ENCODE measurements at regions of chr5 and their contacts with region 1.

Region 1: DNA sequence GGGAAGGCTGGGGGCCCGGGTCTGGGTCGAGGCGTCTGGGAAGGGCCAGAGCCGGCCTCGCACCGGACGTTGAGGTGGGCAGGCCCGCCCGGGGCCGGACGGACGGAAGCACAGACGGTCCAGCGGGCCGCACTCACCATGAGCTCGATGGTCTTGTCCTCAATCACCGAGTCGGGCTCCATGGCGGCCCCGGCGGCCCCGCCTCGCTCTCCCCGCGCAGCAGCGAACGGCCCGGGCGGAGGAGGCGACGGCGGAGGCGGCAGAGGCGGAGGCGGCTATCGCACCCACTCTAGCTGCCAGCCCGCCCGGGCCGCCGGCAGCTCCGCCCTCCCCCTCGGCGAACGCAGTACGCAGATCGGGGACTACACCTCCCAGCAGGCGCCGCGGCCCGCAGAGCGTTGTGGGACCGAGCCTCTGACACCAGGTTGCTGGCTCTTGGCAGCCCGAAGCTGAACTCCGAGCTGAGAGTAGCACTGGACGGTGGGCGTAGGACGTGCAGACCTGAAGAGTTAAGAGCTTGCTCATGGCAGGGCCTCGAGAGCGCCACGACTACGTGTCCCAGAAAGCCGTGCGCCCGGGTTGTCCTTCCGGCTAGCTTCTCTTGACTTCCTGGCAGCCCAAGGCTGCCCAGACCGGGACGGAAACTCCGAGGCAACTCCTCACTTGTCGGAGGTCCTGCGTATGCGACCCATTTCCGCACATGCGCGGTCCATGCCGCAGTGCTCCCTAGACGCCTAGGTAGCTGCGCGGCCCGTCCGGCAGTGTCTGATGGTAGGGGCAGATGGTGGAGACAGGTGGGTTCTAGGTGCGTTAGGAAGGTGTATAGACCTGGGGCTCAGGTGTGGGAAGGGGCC is at the start of gene FBXW11:
- DNase-seq: peak; percentile 85 to 98 (median 92)
- ATAC-seq: peak; percentile 86
- H3K4me3 ChIP-seq: peak within 1 kb of the TSS; percentile 92
- H3K4me3 Mint-ChIP-seq: peak within 1 kb of the TSS; percentile 97
- H3K27ac ChIP-seq: peak within 1 kb of the TSS; percentile 96 to 98
- H3K27ac Mint-ChIP-seq: peak within 1 kb of the TSS; percentile 99
- H3K4me1 ChIP-seq: peaks cover 30% of the 10 kb centered on the region
- H3K4me1 Mint-ChIP-seq: peaks cover 57% of the 10 kb centered on the region
- H3K27me3 ChIP-seq: no peaks in the 10 kb centered on the region
- H3K27me3 Mint-ChIP-seq: no peaks in the 10 kb centered on the region
- CTCF ChIP-seq: no peak
- total RNA-seq, gene FBXW11: 20.9 to 24.0 TPM

Region 2: DNA sequence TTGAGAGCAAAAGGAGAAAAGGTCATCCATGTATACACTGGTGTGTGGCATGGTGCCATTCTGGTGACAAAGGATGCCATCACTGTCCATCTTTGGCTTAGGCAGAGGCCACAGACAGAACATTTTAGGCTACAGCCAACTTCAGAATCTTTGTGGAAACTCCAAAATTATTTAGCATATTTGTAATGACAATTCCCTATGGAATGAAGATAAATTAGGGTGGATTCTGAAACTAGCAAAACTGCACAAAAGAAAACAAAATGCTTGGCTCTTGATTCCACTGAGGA is 92.6 kb before region 1 on chr5:
- CTCF ChIA-PET with region 1: interaction called, 5 read pairs
- POLR2A ChIA-PET with region 1: interaction called, 16 read pairs
- intact Hi-C with region 1: no loop called
- DNase-seq: no peak
- ATAC-seq: no peak
- H3K4me3 ChIP-seq: no peak overlapping the region
- H3K4me3 Mint-ChIP-seq: no peak overlapping the region
- H3K27ac ChIP-seq: no peak overlapping the region
- H3K27ac Mint-ChIP-seq: peak overlapping the region; percentile 9
- H3K4me1 ChIP-seq: no peaks in the 10 kb centered on the region
- H3K4me1 Mint-ChIP-seq: peaks cover 45% of the 10 kb centered on the region
- H3K27me3 ChIP-seq: no peaks in the 10 kb centered on the region
- H3K27me3 Mint-ChIP-seq: no peaks in the 10 kb centered on the region
- CTCF ChIP-seq: no peak

Region 3: DNA sequence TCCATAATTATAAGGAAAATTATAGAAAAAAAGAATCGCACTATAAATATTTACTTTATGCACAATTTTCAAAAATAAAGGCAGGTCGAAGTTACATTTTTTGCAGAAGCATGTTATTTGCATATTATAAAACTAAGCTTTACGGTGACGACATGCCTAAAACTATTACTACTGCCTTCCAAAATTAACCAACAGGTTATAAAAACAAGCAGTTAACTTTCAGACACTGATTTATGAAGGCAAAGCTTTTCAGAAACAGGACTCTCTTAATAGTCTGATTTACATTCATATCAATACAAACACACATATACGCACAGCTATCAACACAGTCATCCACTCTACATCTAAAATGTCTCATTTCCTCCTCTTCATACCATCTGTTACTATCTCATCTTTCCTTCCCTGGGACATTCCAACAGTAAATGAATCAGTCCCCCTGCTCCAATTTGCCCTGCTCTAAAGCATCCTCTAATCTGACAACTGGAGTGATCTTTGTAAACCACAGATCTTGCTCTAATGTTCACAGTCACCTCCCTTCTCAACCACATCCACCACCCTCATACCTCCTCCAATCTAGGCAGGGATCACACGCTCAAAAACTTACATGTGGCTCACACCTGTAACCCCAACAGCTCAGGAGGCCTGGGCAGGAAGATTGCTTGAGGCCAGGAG is 21.7 kb before region 1 on chr5:
- CTCF ChIA-PET with region 1: no interaction called
- POLR2A ChIA-PET with region 1: interaction called, 20 read pairs
- intact Hi-C with region 1: no loop called
- DNase-seq: peak in 4 of 14 experiments; percentile 11 to 81 (median 58)
- ATAC-seq: peak; percentile 66
- H3K4me3 ChIP-seq: no peak overlapping the region
- H3K4me3 Mint-ChIP-seq: no peak overlapping the region
- H3K27ac ChIP-seq: no peak overlapping the region
- H3K27ac Mint-ChIP-seq: no peak overlapping the region
- H3K4me1 ChIP-seq: peaks cover 16% of the 10 kb centered on the region
- H3K4me1 Mint-ChIP-seq: peaks cover 26% of the 10 kb centered on the region
- H3K27me3 ChIP-seq: no peaks in the 10 kb centered on the region
- H3K27me3 Mint-ChIP-seq: no peaks in the 10 kb centered on the region
- CTCF ChIP-seq: no peak

Region 4: GRCh38 chr5:172071289-172071875 is 64.8 kb after region 1 on chr5:
- CTCF ChIA-PET with region 1: no interaction called
- POLR2A ChIA-PET with region 1: interaction called, 53 read pairs
- intact Hi-C with region 1: no loop called
- DNase-seq: peak in 1 of 14 experiments; percentile 52
- ATAC-seq: no peak
- H3K4me3 ChIP-seq: no peak overlapping the region
- H3K4me3 Mint-ChIP-seq: peak overlapping the region; percentile 23
- H3K27ac ChIP-seq: peak overlapping the region; percentile 23 to 61
- H3K27ac Mint-ChIP-seq: peak overlapping the region; percentile 89
- H3K4me1 ChIP-seq: peaks cover 33% of the 10 kb centered on the region
- H3K4me1 Mint-ChIP-seq: peaks cover 60% of the 10 kb centered on the region
- H3K27me3 ChIP-seq: no peaks in the 10 kb centered on the region
- H3K27me3 Mint-ChIP-seq: no peaks in the 10 kb centered on the region
- CTCF ChIP-seq: no peak

Region 5: DNA sequence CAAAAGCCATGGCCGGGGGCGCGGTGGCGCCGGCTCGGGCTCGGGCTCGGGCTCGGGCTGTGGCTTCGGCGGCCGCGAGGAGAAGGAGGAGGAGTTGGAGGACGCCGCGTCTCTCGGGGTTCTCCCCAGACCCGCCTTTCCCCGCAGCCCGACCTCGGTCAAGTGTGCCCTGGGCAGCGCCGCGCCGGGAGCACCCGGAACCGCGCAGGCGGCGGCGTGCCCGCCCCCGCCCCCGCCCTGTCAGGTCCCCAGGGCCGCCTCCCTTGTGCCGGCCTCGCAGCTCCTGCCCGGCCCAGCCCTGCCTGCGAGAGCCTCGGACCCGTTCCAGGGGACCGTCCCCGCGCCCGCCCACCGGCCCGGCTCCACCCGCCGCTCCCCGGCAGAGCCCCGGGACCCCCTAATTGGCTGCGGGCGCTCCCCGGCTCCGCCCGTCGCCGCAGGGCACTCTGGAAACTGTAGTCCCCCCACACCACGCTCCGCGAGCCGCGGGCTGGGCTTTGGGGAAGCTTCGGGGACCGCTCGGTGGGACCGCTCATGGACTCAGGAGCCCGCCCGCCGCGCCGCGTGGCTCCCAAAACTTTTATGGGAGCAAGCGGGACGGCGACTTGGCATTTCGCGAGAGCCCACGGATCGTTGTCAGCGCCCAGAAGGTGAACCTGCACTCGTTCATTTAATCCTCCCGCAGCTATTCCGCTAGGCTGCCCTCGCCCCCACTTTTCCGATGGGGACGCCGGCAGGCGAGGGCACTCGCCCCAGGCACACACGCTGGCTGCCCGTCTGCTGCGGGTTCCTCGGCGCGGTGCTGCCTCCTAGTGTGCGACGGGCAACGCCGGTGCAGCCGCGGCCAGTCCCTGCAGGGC is 181.7 kb after region 1 on chr5 and contains the start of gene STK10:
- CTCF ChIA-PET with region 1: interaction called, 7 read pairs
- POLR2A ChIA-PET with region 1: interaction called, 37 read pairs
- intact Hi-C with region 1: loop called (anchors 2 to 5 kb)
- DNase-seq: peak; percentile 79 to 95 (median 86)
- ATAC-seq: peak; percentile 74
- H3K4me3 ChIP-seq: peak within 1 kb of the TSS; percentile 99
- H3K4me3 Mint-ChIP-seq: peak within 1 kb of the TSS; percentile 100
- H3K27ac ChIP-seq: peak within 1 kb of the TSS; percentile 89 to 98
- H3K27ac Mint-ChIP-seq: peak within 1 kb of the TSS; percentile 98
- H3K4me1 ChIP-seq: peaks cover 37% of the 10 kb centered on the region
- H3K4me1 Mint-ChIP-seq: peaks cover 37% of the 10 kb centered on the region
- H3K27me3 ChIP-seq: no peaks in the 10 kb centered on the region
- H3K27me3 Mint-ChIP-seq: no peaks in the 10 kb centered on the region
- CTCF ChIP-seq: peak; percentile 92
- total RNA-seq, gene STK10: 211 to 229 TPM

Region 6: DNA sequence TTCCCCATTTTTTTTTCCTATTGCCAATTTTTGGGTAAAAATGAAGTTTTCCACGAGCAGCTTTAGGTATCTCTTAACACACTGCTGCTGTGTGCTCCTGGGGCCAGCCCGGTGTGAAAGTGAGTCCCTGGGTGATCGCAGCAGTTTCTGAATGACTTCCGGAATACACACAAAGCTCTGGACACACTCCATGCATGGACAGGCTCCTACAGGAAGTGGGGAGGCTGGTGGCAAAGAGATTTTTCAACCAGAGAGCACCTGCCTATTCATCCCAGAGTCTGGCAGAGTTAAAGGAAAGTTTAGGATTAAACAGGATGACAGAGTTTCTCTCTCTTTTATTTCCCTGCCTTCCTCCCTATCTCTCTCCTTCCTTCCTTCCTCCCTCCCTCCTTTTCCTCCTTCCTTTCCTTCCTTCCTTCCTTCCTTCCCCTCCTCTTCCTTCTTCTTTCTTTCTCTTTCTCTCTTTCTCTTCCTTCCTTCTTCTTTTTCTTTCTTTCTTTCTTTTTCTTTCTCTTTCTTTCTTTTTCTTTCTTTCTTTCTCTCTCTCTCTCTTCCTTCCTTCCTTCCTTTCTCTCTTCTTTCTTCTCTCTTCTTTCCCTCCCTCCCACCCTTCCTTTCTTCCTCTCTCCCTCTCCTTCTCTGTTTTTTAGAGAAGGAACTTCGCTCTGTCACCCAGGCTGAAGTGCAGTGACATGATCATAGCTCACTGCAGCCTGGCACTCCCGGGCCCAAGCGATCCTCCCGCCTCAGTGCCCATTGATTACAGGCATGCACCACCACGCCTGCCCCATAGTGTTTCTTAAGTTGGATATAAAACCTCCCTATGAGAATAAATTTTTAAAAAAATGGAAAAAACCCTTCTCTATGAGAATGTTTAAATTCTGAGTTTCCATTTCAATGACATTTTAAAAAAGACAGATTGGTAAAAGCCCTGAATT is 315.7 kb after region 1 on chr5:
- CTCF ChIA-PET with region 1: no interaction called
- POLR2A ChIA-PET with region 1: no interaction called
- intact Hi-C with region 1: no loop called
- DNase-seq: no peak
- ATAC-seq: no peak
- H3K4me3 ChIP-seq: no peak overlapping the region
- H3K4me3 Mint-ChIP-seq: no peak overlapping the region
- H3K27ac ChIP-seq: no peak overlapping the region
- H3K27ac Mint-ChIP-seq: no peak overlapping the region
- H3K4me1 ChIP-seq: no peaks in the 10 kb centered on the region
- H3K4me1 Mint-ChIP-seq: no peaks in the 10 kb centered on the region
- H3K27me3 ChIP-seq: no peaks in the 10 kb centered on the region
- H3K27me3 Mint-ChIP-seq: no peaks in the 10 kb centered on the region
- CTCF ChIP-seq: no peak

Region 7: DNA sequence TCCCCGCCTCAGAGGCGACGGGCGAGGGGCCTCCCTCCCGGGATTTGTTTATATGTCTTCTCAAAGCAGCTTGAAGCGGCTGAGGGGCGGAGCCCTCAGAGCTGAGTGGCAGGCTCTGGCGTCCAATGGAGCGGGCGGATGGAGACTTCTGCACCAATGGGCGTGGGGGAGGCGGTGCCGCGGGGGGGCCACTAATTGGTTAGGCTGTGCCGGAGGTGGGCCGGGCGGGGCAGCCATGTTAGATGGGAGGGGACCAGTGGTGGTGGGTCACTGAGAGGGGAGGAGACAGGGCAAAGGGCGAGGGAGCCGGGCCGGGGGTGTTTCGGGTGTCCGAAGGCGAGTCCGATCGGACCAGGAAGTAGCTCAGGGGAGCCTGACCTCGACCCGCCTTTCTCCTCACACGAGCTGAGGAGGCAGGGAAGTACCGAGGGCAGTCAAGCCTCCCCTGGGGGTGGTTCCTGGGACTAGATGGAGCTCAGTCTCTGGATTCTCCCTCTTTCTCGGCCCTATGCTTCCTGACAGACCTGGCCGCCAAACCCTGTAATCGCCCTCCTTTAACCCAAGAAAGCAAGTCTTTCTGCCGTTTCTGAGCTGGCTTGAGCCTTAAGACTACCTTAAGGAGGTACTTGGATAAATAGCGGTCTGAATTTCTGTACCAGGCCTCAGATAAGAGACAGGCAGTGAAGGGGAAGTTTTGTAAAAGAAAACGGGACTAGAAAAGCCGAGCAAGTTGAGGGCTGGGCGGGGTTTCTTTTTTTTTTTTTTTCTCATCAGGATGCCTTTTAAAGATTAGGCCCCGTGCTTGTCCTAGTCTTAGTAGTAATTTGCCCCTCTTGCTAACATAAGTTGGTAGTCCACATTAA is 1050.7 kb after region 1 on chr5:
- CTCF ChIA-PET with region 1: no interaction called
- POLR2A ChIA-PET with region 1: interaction called, 3 read pairs
- intact Hi-C with region 1: loop called in 1 of 2 experiments (anchors 5 kb)
- DNase-seq: peak; percentile 96 to 99 (median 98)
- ATAC-seq: peak; percentile 80
- H3K4me3 ChIP-seq: peak overlapping the region; percentile 69
- H3K4me3 Mint-ChIP-seq: peak overlapping the region; percentile 98
- H3K27ac ChIP-seq: peak overlapping the region; percentile 91 to 97
- H3K27ac Mint-ChIP-seq: peak overlapping the region; percentile 97
- H3K4me1 ChIP-seq: peaks cover 27% of the 10 kb centered on the region
- H3K4me1 Mint-ChIP-seq: peaks cover 70% of the 10 kb centered on the region
- H3K27me3 ChIP-seq: no peaks in the 10 kb centered on the region
- H3K27me3 Mint-ChIP-seq: no peaks in the 10 kb centered on the region
- CTCF ChIP-seq: no peak